Panc1 (cell line): ENCODE measurements at regions of chr22 and their contacts with region 1.

Region 1: GRCh38 chr22:32103658-32104315 is 55.3 kb downstream of the C22orf42 start:
- DNase-seq: no peak
- ATAC-seq: no peak
- H3K4me3 ChIP-seq: no peak overlapping the region
- H3K27ac ChIP-seq: no peak overlapping the region
- H3K4me1 ChIP-seq: no peaks in the 10 kb centered on the region
- H3K27me3 ChIP-seq: no peaks in the 10 kb centered on the region
- CTCF ChIP-seq: peak; percentile 35; the same call in 1 of the 2 replicates

Region 2: GRCh38 chr22:32132783-32133182 is 29.0 kb after region 1 on chr22:
- CTCF ChIA-PET with region 1: interaction called, 10 read pairs
- POLR2A ChIA-PET with region 1: no interaction called
- in situ Hi-C with region 1: no loop called
- intact Hi-C with region 1: no loop called
- DNase-seq: no peak
- ATAC-seq: no peak
- H3K4me3 ChIP-seq: no peak overlapping the region
- H3K27ac ChIP-seq: no peak overlapping the region
- H3K4me1 ChIP-seq: no peaks in the 10 kb centered on the region
- H3K27me3 ChIP-seq: no peaks in the 10 kb centered on the region
- CTCF ChIP-seq: no peak

Region 3: GRCh38 chr22:32265882-32266767 is 162.3 kb after region 1 on chr22:
- CTCF ChIA-PET with region 1: no interaction called
- POLR2A ChIA-PET with region 1: no interaction called
- in situ Hi-C with region 1: no loop called
- intact Hi-C with region 1: loop called (anchors 5 kb)
- DNase-seq: peak; percentile 25
- ATAC-seq: no peak
- H3K4me3 ChIP-seq: no peak overlapping the region
- H3K27ac ChIP-seq: no peak overlapping the region
- H3K4me1 ChIP-seq: no peaks in the 10 kb centered on the region
- H3K27me3 ChIP-seq: no peaks in the 10 kb centered on the region; the same call in 1 of the 2 replicates
- CTCF ChIP-seq: peak; percentile 86